Testis (tissue), 5 donors: ENCODE measurements at regions of chr3 and their contacts with region 1.

Region 1: GRCh38 chr3:61561374-61562041 is at the start of gene PTPRG:
- DNase-seq: peak; percentile 95
- H3K4me3 ChIP-seq: peak within 1 kb of the TSS; percentile 94 to 97
- H3K27ac ChIP-seq: peak within 1 kb of the TSS; percentile 96 to 98
- H3K4me1 ChIP-seq: peaks cover 7% of the 10 kb centered on the region
- H3K27me3 ChIP-seq: no peaks in the 10 kb centered on the region
- CTCF ChIP-seq: no peak
- POLR2A ChIP-seq: peak; percentile 48
- total RNA-seq, gene PTPRG: 75.4 to 107 TPM

Region 2: GRCh38 chr3:61493339-61493738 is 68.2 kb before region 1 on chr3:
- intact Hi-C with region 1: no loop called
- DNase-seq: no peak
- H3K4me3 ChIP-seq: no peak overlapping the region
- H3K27ac ChIP-seq: no peak overlapping the region
- H3K4me1 ChIP-seq: no peaks in the 10 kb centered on the region
- H3K27me3 ChIP-seq: no peaks in the 10 kb centered on the region
- CTCF ChIP-seq: no peak
- POLR2A ChIP-seq: no peak

Region 3: DNA sequence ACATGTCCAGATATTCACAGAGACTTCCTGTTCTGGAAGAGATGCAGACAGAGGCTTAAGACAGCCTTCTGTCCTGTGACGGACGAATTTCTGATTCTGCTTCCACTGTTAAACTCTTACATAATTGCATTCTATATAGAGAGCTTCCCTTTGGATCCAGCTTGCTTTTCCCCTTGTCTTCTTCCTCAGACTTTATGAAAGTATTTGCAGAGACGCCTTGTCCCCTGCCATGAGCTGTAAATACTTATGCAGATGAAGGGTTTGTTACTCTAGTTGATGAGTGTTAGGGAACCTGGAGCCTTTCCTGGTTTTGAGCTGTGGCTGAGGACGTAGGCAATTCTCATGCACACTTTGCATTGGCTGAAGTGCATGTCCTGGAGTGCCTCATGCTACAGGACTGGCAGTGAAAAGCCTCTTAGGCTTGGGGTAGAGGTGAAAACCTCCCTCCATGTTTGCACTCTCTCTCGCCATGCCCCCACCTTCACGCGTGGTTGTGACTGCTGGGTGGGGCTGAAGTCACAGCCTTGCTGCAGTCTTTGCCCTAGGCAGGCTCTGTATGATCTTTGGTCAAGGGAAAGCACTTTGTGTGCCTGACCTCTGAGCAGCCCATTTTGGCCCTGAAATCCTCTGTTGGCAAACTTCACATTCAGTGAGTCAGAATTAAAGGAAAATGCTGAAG is 286.4 kb after region 1 on chr3:
- intact Hi-C with region 1: loop called (anchors 10 kb)
- DNase-seq: peak; percentile 61
- H3K4me3 ChIP-seq: no peak overlapping the region
- H3K27ac ChIP-seq: peak overlapping the region; percentile 53 to 81
- H3K4me1 ChIP-seq: peaks cover 28% of the 10 kb centered on the region
- H3K27me3 ChIP-seq: no peaks in the 10 kb centered on the region
- CTCF ChIP-seq: no peak
- POLR2A ChIP-seq: no peak

Region 4: GRCh38 chr3:62188681-62189383 is 627.3 kb after region 1 on chr3:
- intact Hi-C with region 1: loop called (anchors 10 kb)
- DNase-seq: peak; percentile 90
- H3K4me3 ChIP-seq: no peak overlapping the region
- H3K27ac ChIP-seq: no peak overlapping the region
- H3K4me1 ChIP-seq: no peaks in the 10 kb centered on the region
- H3K27me3 ChIP-seq: no peaks in the 10 kb centered on the region
- CTCF ChIP-seq: peak; percentile 63 to 92 (median 84)
- POLR2A ChIP-seq: no peak